ENCODE measurements at regions of chr12 and their contacts with region 1.

Region 1: GRCh38 chr12:91951571-91951970 is 194.1 kb downstream of the BTG1 start:
- DNase-seq: no peak
- H3K4me3 Mint-ChIP-seq: no peak overlapping the region
- H3K27ac Mint-ChIP-seq: peak overlapping the region; percentile 37
- H3K4me1 Mint-ChIP-seq: peaks cover 23% of the 10 kb centered on the region
- H3K27me3 Mint-ChIP-seq: no peaks in the 10 kb centered on the region
- CTCF ChIP-seq: no peak

Region 2: DNA sequence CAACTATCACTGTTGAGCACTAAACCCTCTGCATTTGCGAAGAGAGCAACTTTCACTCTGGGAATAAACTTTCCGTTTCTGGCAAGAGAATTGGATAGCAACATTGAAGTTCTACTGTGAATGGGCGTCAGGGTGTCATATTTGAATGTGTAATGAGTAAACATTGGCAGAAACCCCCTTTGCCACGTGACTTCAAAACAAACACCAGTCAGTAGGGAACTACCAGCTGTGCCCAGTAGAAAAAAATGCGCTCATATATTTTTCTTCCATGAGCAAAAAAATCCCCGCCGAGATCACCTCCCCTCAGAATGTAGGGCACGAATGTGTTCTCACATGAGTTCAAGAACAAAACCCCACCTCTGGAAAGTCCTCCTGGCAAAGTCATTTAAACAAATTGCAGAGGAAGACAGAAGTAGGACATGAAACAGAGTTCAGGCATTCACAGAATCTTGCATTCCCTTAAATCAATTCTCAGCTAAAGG is 113.5 kb after region 1 on chr12:
- CTCF ChIA-PET with region 1: no interaction called
- intact Hi-C with region 1: loop called (anchors 5 kb)
- DNase-seq: peak; percentile 60
- H3K4me3 Mint-ChIP-seq: peak overlapping the region; percentile 60
- H3K27ac Mint-ChIP-seq: peak overlapping the region; percentile 85
- H3K4me1 Mint-ChIP-seq: peaks cover 79% of the 10 kb centered on the region
- H3K27me3 Mint-ChIP-seq: no peaks in the 10 kb centered on the region
- CTCF ChIP-seq: no peak